Breast epithelium (tissue), 4 donors: ENCODE measurements at regions of chr11 and their contacts with region 1.

Region 1: GRCh38 chr11:13462901-13463778 is at the start of gene BTBD10:
- DNase-seq: peak; percentile 86 to 91
- H3K4me3 ChIP-seq: peak within 1 kb of the TSS; percentile 87 to 91 (median 88)
- H3K27ac ChIP-seq: peak within 1 kb of the TSS; percentile 93 to 94
- H3K4me1 ChIP-seq: peaks cover 0 to 5% of the 10 kb centered on the region in 2 donors
- H3K27me3 ChIP-seq: no peaks in the 10 kb centered on the region
- CTCF ChIP-seq: no peak
- POLR2A ChIP-seq: peak; percentile 82
- total RNA-seq, gene BTBD10: 29.3 to 40.4 (median 32.1) TPM

Region 2: DNA sequence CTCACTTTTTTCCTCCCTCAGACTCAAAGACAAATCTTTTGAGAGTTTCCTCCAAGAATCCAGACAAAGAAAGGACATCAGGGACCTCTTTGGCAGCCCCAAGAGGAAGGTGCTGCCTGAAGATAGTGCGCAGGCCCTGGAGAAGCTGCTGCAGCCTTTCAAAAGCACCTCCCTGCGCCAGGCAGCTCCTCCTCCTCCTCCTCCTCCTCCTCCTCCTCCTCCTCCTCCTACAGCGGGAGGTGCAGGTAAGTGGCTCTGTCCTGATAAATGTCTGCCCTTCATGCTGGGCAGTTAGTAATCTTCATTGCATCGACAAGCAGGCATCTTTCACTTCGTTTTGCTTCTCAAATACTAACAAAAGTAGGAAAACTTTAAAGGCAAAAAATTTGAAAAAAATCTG is 1168.5 kb before region 1 on chr11:
- intact Hi-C with region 1: loop called (anchors 5 kb)
- DNase-seq: no peak
- H3K4me3 ChIP-seq: no peak overlapping the region
- H3K27ac ChIP-seq: no peak overlapping the region
- H3K4me1 ChIP-seq: no peaks in the 10 kb centered on the region
- H3K27me3 ChIP-seq: no peaks in the 10 kb centered on the region
- CTCF ChIP-seq: no peak
- POLR2A ChIP-seq: no peak